ENCODE measurements at regions of chrX and their contacts with region 1.

Region 1: DNA sequence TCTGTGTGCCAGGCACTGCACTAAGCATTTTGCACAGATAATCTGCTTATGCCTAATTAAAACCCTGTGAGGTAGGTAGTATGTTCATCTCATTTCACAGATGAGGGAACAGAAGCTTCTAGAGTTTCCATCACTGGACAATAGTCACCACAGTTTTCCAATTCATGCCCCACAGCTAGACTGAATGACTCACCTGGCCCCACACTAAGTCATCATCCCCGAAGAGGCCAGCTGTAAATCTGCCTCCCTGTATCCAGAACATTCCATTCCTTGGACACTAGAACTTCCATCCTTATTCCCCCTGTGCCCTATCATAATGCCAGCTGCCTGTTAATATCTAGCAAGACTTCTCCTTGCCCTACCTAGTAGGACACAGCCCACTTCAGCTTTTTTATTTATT is 40.9 kb upstream of the NYX start:
- DNase-seq: no peak
- ATAC-seq: no peak
- H3K4me3 ChIP-seq: no peak overlapping the region
- H3K4me3 Mint-ChIP-seq: no peak overlapping the region
- H3K27ac ChIP-seq: no peak overlapping the region
- H3K27ac Mint-ChIP-seq: no peak overlapping the region
- H3K4me1 ChIP-seq: no peaks in the 10 kb centered on the region
- H3K4me1 Mint-ChIP-seq: no peaks in the 10 kb centered on the region
- H3K27me3 ChIP-seq: no peaks in the 10 kb centered on the region
- H3K27me3 Mint-ChIP-seq: peaks cover 0 to 3% of the 10 kb centered on the region in 2 donors

Region 2: GRCh38 chrX:41369152-41369551 is 37.1 kb before region 1 on chrX:
- CTCF ChIA-PET with region 1: no interaction called
- POLR2A ChIA-PET with region 1: interaction called in 1 of 2 experiments, 13 read pairs
- DNase-seq: no peak
- ATAC-seq: no peak
- H3K4me3 ChIP-seq: no peak overlapping the region
- H3K4me3 Mint-ChIP-seq: no peak overlapping the region
- H3K27ac ChIP-seq: no peak overlapping the region
- H3K27ac Mint-ChIP-seq: no peak overlapping the region
- H3K4me1 ChIP-seq: no peaks in the 10 kb centered on the region
- H3K4me1 Mint-ChIP-seq: peaks cover 0 to 7% (median 0%) of the 10 kb centered on the region in 3 donors
- H3K27me3 ChIP-seq: no peaks in the 10 kb centered on the region
- H3K27me3 Mint-ChIP-seq: no peaks in the 10 kb centered on the region

Region 3: DNA sequence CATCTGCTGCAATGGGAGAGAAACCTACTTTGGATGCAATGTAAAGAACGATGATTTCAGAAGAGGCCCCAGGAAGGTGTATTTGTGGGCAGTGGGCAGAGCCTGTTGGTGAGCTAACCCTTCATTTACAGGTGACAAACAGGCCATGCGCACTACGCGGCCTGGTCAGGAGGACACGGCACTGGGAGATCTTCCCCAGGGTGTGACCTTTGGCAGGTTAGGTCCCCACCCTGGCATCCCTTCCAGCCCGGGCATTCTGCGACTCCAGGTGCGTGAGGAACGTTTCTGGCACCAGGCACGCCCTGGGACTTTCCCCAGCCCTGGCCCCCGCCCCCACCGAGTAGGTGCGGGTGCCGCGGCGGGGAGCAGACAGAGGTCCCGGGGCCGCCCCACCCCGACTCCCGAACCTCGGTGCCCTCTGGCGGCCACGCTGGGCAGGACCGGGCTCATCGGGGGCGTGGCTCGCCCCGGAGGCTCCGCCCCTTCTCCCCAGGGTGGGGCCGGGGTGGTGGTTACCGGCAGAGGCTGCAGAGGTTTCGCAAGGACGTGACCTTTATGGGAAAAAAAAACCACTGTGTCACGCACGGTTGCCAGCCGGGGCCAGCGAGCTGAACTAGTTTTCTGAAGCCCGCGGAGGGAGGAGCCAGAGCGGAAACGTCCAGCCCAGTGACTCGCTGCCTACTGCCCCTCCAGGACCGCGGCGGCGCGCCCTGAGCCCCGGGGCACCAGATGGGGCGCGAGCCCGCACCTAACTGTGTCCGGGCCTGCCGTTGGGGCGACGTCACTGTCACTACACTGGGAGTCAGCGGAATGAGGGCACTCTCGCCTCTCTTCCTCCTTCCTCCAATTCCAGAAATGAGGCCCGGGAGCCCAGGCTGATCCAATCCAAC is 36.0 kb after region 1 on chrX:
- CTCF ChIA-PET with region 1: no interaction called
- POLR2A ChIA-PET with region 1: no interaction called
- DNase-seq: peak; percentile 67 to 89 (median 79)
- ATAC-seq: peak; percentile 95 to 99 (median 98)
- H3K4me3 ChIP-seq: peak overlapping the region; percentile 44 to 59
- H3K4me3 Mint-ChIP-seq: peak overlapping the region; percentile 59 to 63 (median 60)
- H3K27ac ChIP-seq: no peak overlapping the region
- H3K27ac Mint-ChIP-seq: peak overlapping the region; percentile 43 to 50
- H3K4me1 ChIP-seq: peaks cover 0 to 15% of the 10 kb centered on the region in 2 experiments
- H3K4me1 Mint-ChIP-seq: peaks cover 4 to 13% (median 8%) of the 10 kb centered on the region in 3 donors
- H3K27me3 ChIP-seq: no peaks in the 10 kb centered on the region
- H3K27me3 Mint-ChIP-seq: peaks cover 0 to 4% of the 10 kb centered on the region in 2 donors